Left lung (tissue), 14 donors: ENCODE measurements at regions of chr11 and their contacts with region 1.

Region 1: GRCh38 chr11:10857709-10858438 is at the start of gene ZBED5:
- DNase-seq: peak; percentile 97 to 99 (median 97)
- ATAC-seq: peak; percentile 96
- H3K4me3 ChIP-seq: peak within 1 kb of the TSS; percentile 78 to 89
- H3K27ac ChIP-seq: peak within 1 kb of the TSS; percentile 99
- H3K4me1 ChIP-seq: peaks cover 15 to 33% of the 10 kb centered on the region in 2 donors
- H3K27me3 ChIP-seq: no peaks in the 10 kb centered on the region
- CTCF ChIP-seq: no peak
- polyA plus RNA-seq, gene ZBED5: 109 to 124 (median 119) TPM

Region 2: DNA sequence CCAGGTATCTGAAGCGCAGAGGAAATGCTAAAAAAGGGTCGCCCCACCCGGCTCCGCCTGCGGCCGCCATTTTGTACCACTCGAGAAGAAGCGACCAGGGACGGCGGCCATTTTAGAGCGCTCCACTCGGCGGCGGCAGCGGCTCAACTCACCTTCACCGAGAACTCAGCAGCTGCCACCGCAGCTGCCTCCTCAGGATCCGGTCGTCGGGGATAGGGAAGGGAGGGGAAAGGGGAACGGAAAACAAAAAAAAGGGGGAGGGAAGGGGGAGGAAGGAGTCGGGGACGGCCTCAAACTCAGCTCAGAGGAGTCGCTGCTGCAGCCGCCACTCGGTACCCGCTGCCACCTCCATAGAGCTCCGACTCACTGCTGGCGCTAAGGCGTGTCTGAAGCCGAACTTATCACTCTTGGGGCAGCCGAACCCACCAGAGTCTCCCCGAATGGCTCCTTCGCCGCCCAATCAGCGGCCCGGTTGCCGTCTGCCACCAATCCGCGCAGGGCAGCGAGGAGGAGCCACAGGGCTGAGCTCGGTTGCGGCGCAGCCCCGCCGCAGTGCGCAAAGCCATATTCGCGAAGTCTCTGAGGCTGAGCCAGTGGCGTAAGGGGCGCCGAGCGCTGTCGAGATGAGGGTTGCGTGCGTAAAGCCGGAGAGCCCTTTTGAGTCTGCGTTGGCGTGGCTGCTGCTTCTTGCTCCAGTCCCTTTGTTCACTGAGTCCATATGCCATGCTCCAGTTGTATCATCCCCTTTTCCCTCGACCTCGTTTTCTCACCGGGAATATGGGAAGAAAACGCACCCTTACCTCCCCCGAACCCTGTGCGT is 49.1 kb before region 1 on chr11 and contains the start of gene EIF4G2:
- intact Hi-C with region 1: loop called in 1 of 2 experiments (anchors 10 kb)
- DNase-seq: peak; percentile 98 to 100 (median 99)
- ATAC-seq: peak; percentile 96
- H3K4me3 ChIP-seq: peak within 1 kb of the TSS; percentile 97 to 98
- H3K27ac ChIP-seq: peak within 1 kb of the TSS; percentile 99 to 100
- H3K4me1 ChIP-seq: peaks cover 29 to 50% of the 10 kb centered on the region in 2 donors
- H3K27me3 ChIP-seq: no peaks in the 10 kb centered on the region
- CTCF ChIP-seq: no peak
- polyA plus RNA-seq, gene EIF4G2: 835 to 1,018 (median 941) TPM